ENCODE measurements at regions of chr12 and their contacts with region 1.

Region 1: GRCh38 chr12:4449851-4450221 is 4.2 kb upstream of the FGF6 start:
- DNase-seq: peak; percentile 23
- H3K4me3 ChIP-seq: no peak overlapping the region
- H3K27ac ChIP-seq: no peak overlapping the region
- H3K4me1 ChIP-seq: no peaks in the 10 kb centered on the region
- H3K27me3 ChIP-seq: peaks cover 4% of the 10 kb centered on the region
- CTCF ChIP-seq: no peak
- EP300 ChIP-seq: no peak
- POLR2A ChIP-seq: no peak

Region 2: DNA sequence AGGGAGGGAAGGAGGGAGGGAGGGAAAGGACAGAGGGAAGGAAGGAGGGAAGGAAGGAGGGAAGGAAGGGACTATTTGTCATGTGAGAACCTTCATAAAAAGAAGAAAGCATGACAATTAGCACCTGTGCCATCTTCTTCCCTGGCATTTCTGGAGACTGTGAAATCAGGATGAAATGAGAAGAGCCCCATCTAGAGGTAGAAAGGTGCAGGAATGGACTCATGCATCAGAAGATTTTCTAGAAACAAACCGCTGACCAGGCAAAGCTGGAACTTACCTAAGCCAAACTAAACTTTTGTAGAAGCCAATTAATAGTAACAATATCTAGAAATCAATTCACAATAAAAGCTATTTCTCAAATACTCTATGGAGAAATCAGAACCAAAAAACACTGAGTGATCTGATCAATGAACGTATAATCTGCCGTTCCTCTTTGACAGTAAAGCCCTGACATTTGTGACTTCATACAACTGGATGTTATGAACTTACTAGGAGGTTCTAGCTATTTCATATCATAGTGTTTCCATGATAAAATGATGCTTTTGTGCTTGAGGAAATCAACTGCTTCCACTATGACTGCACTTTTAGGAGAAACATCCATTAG is 672.5 kb before region 1 on chr12:
- in situ Hi-C with region 1: no loop called
- intact Hi-C with region 1: no loop called
- DNase-seq: no peak
- H3K4me3 ChIP-seq: no peak overlapping the region
- H3K27ac ChIP-seq: no peak overlapping the region
- H3K4me1 ChIP-seq: no peaks in the 10 kb centered on the region
- H3K27me3 ChIP-seq: no peaks in the 10 kb centered on the region
- CTCF ChIP-seq: peak; percentile 58 to 75 (median 67)
- EP300 ChIP-seq: no peak
- POLR2A ChIP-seq: no peak

Region 3: DNA sequence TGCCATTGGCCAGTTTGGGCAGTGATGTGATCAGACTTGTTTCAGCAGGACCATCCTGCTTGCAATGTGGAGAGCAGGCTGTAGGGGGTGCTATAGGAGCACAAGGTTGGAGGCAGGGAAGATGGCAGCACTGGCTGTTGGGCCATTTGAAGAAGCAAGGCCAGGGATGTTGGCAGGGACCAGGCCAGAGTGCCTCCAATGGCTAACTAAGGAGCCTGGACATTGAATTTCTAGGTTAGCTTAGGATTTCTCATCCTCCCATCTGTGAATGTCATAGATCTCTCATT is 93.9 kb before region 1 on chr12:
- in situ Hi-C with region 1: loop called in 1 of 4 experiments (anchors 25 kb)
- intact Hi-C with region 1: no loop called
- DNase-seq: peak; percentile 24
- H3K4me3 ChIP-seq: no peak overlapping the region
- H3K27ac ChIP-seq: no peak overlapping the region
- H3K4me1 ChIP-seq: no peaks in the 10 kb centered on the region
- H3K27me3 ChIP-seq: no peaks in the 10 kb centered on the region
- CTCF ChIP-seq: peak in 4 of 5 experiments; percentile 19 to 30 (median 26)
- EP300 ChIP-seq: no peak
- POLR2A ChIP-seq: no peak